ENCODE measurements at regions of chr13 and their contacts with region 1.

Region 1: GRCh38 chr13:94928127-94928775 is 215.9 kb upstream of the SOX21 start:
- DNase-seq: no peak
- H3K4me3 ChIP-seq: no peak overlapping the region
- H3K27ac ChIP-seq: no peak overlapping the region
- H3K4me1 ChIP-seq: no peaks in the 10 kb centered on the region
- H3K27me3 ChIP-seq: no peaks in the 10 kb centered on the region
- CTCF ChIP-seq: no peak
- EP300 ChIP-seq: no peak
- POLR2A ChIP-seq: no peak

Region 2: DNA sequence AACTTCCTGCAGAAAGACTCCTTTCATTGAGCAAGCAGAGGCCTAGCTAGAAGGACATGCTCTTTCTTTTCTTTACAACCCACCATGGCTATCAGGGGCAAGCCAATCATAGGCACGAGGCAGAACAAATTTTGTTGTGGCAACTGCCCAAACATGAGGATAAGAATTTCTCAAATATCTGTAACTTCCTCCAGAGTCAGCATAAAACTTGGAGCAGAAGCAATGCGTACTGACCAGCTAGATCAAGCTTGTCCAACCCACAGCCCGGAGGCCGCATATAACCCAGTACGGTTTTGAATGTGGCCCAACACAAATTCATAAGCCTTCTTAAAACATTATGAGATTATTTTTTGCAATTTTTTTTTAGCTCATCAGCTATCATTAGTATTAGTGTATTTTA is 129.0 kb before region 1 on chr13:
- intact Hi-C with region 1: loop called in 1 of 4 experiments (anchors 10 kb)
- DNase-seq: no peak
- H3K4me3 ChIP-seq: no peak overlapping the region
- H3K27ac ChIP-seq: no peak overlapping the region
- H3K4me1 ChIP-seq: no peaks in the 10 kb centered on the region
- H3K27me3 ChIP-seq: no peaks in the 10 kb centered on the region
- CTCF ChIP-seq: no peak
- EP300 ChIP-seq: no peak
- POLR2A ChIP-seq: no peak

Region 3: DNA sequence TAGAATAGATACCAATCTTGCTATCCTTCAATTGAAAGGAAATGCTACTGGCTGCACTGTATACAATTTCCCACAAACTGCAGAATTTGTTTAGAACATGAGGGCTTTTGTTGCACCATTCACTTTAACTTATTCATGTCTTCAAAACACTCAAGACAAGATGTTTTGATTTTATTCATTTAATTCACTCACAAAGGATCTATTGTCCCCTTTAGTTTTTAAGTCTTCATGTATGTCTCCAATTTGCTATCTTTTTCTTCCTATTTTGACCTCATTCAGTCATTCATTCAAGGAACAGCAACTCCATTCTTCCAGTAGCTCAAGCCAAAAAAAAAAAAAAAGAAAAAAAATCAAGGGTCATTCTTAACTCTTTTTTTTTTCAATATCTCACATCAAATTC is 85.3 kb before region 1 on chr13:
- intact Hi-C with region 1: no loop called
- DNase-seq: no peak
- H3K4me3 ChIP-seq: no peak overlapping the region
- H3K27ac ChIP-seq: no peak overlapping the region
- H3K4me1 ChIP-seq: no peaks in the 10 kb centered on the region
- H3K27me3 ChIP-seq: no peaks in the 10 kb centered on the region
- CTCF ChIP-seq: no peak
- EP300 ChIP-seq: no peak
- POLR2A ChIP-seq: no peak

Region 4: GRCh38 chr13:94988654-94989053 is 60.4 kb after region 1 on chr13:
- intact Hi-C with region 1: no loop called
- DNase-seq: no peak
- H3K4me3 ChIP-seq: no peak overlapping the region
- H3K27ac ChIP-seq: no peak overlapping the region
- H3K4me1 ChIP-seq: peaks cover 1% of the 10 kb centered on the region
- H3K27me3 ChIP-seq: no peaks in the 10 kb centered on the region
- CTCF ChIP-seq: no peak
- EP300 ChIP-seq: no peak
- POLR2A ChIP-seq: no peak

Region 5: DNA sequence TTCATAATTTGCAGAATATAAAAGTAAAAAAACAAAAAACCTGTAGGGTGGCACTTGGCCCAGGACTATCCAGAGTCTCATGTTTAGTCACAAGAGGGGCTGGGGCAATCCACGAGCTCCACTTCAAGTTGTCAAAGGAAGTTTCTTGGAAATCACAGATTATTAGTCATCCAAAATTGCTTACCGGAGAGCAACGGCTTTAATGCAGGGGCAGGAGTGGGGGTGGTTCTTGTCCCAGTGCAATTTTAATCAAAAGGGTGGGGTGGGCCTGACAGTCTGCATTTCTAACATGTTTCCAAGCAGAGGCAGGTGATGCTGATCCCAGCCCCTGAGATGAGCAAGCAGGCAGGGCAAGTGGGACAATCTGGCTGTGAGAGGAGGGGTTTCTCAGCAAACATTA is 139.1 kb after region 1 on chr13:
- intact Hi-C with region 1: no loop called
- DNase-seq: no peak
- H3K4me3 ChIP-seq: no peak overlapping the region
- H3K27ac ChIP-seq: no peak overlapping the region
- H3K4me1 ChIP-seq: no peaks in the 10 kb centered on the region
- H3K27me3 ChIP-seq: no peaks in the 10 kb centered on the region
- CTCF ChIP-seq: no peak
- EP300 ChIP-seq: no peak
- POLR2A ChIP-seq: no peak